Stomach (tissue), 19 donors: ENCODE measurements at regions of chr10 and their contacts with region 1.

Region 1: DNA sequence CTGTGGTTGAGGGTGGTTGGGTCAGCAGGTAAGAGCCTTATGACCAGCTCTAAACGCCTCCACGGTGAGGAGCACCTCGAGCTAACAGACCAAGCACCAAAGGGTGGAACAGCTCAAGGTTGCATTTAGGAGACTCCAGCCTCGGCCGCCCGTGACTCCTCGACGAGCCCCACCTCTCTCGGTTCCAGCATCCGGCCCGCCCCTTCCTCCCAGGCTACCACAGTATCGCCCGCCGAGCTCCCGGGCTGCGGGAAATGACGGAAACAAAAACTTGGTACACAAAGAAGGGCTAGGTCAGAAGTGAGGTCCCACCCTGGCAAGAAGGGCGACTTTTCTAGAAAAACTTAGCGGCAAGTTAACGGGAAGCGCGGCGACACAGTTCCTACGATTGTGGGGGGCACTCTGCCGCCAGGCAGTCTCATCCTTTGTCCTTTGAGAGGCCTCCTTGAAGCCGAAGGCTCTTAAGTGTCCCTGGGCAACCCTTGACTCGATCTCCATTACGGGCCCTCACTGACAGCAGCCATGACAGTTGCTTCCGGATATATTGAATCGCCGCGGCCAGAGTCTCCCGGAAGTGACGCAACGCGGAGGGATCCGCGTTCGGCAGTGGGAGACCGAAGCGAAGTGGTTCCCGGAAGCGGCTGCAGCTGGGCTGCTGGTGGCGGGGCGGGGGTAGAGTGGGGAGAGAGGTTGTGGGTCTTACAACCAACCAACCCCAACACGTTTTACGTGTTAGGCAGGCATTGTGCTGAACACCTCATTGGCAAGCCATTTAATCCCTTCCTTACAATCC is 40.2 kb upstream of the ZNF518A start:
- DNase-seq: peak; percentile 96 to 98
- H3K4me3 ChIP-seq: peak overlapping the region; percentile 60 to 77 (median 69)
- H3K27ac ChIP-seq: peak overlapping the region; percentile 92 to 98 (median 95)
- H3K4me1 ChIP-seq: peaks cover 4 to 13% (median 6%) of the 10 kb centered on the region in 4 donors
- H3K27me3 ChIP-seq: peaks cover 0 to 29% (median 17%) of the 10 kb centered on the region in 3 donors
- CTCF ChIP-seq: no peak
- EP300 ChIP-seq: no peak
- POLR2A ChIP-seq: peak in 1 of 4 donors; percentile 25

Region 2: DNA sequence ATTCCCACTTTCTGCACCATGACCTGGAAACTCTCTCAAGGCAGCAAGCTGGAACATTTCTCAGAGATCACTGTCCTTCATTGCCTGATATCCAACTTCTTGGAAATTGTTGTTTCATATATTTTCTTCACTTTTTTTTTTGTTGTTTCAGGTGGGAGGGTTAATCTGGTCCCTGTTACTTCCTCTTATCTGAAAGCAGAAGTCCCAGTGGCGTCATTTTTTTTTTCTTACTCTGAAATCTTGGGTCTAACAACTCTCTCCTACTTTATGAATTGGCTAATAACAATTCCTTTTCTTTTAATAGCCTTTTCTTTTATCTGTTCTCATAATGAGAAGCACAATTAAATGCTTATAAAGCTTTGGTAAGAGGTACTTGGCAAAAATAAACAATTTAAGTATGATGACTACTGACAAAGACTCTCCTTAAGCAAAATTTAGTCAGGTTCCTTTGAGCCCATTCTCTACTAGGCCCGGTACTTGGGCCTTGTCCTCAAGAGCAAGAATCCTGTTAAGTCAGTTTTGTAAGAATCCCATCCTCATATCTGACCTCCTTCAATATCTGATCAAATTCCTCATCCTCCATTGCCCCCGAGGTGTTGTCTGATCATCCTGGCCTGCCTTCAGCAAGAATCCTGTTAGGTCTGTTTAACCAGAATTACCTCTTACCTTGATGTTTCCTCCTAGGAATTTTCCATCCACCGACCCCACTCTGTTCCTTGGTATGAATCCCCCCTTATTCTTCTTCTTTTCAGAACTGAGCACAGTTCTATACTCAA is 193.6 kb before region 1 on chr10:
- intact Hi-C with region 1: no loop called
- DNase-seq: no peak
- H3K4me3 ChIP-seq: no peak overlapping the region
- H3K27ac ChIP-seq: no peak overlapping the region
- H3K4me1 ChIP-seq: no peaks in the 10 kb centered on the region
- H3K27me3 ChIP-seq: no peaks in the 10 kb centered on the region
- CTCF ChIP-seq: no peak
- EP300 ChIP-seq: no peak
- POLR2A ChIP-seq: no peak

Region 3: DNA sequence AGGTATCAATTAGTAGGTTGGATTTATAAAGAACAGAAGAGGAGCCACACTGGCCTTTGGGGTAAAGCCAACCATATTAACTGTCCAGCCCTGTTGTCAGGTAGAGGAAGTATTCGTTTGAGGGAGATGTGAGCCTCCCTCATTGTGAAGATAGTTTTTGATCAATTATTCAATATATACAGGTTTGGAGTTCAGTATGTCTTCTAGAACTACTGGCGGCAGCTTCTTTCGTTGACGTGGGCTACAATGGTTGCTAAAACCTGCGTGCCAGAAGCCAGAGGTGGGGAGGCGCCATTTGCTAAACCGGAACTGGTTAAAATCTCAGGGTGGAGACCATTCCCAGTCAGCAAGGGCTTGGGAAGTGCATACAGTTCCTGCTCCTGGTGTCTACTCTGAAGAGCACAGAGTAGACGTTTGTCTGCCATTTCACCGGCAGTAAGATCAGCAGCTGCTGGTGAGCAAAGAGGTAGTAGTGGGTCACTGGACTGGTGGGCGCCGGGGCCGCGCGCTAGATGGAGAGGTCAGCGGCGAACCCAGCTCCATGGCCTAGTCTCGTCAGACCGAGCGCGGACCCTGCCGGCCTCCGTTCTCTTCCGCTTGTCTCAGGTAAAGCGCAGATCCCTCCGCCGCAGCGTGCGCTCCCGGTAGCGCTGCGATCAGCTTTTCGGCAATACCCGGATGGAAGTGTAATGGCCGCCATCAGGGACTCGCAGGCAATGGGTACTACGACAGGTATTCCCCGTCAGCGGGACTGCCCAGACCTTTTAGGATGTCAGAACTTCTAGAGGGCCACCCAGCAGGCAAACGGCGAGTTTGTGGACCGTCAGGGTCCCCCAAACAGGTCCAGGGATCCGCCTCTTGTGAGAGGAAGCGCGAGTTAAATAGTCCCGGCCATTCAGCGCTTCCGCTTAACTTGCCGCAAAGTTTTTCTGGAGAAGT is 39.8 kb after region 1 on chr10 and contains the start of gene ZNF518A:
- intact Hi-C with region 1: loop called (anchors 5 kb)
- DNase-seq: peak; percentile 94 to 98
- H3K4me3 ChIP-seq: peak within 1 kb of the TSS; percentile 65 to 86 (median 76)
- H3K27ac ChIP-seq: peak within 1 kb of the TSS; percentile 94 to 100 (median 96)
- H3K4me1 ChIP-seq: peaks cover 8 to 23% (median 18%) of the 10 kb centered on the region in 4 donors
- H3K27me3 ChIP-seq: peaks cover 0 to 32% (median 4%) of the 10 kb centered on the region in 3 donors
- CTCF ChIP-seq: no peak
- EP300 ChIP-seq: no peak
- POLR2A ChIP-seq: no peak
- total RNA-seq, gene ZNF518A: 7.0 to 57.5 (median 16.1) TPM